ENCODE measurements at regions of chr13 and their contacts with region 1.

Region 1: DNA sequence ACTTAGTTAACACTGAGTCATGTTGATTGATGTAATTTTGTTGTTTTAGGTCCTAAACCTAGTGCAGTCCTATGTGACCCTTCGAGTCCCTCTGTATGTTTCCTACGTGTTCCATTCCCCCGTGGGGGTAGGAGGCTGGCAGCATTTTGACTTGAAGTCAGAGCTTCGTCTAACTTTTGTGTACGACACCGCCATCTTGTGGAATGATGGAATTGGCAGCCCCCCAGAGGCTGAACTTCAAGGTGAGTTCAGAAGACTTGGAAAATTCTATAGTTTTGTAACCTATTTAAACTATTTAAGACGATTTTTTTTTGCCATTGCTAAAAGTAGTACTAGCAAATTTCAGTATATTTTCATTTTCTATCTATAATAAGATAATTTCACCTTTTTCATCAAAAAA is 117.9 kb downstream of the STOML3 start:
- DNase-seq: peak; percentile 18 to 65
- ATAC-seq: peak; percentile 50 to 80
- H3K4me3 ChIP-seq: no peak overlapping the region
- H3K27ac ChIP-seq: no peak overlapping the region
- H3K4me1 ChIP-seq: peaks cover 9 to 15% of the 10 kb centered on the region in 2 donors
- H3K27me3 ChIP-seq: no peaks in the 10 kb centered on the region
- CTCF ChIP-seq: peak in 4 of 5 experiments; percentile 11 to 51 (median 46)
- POLR2A ChIP-seq: no peak

Region 2: DNA sequence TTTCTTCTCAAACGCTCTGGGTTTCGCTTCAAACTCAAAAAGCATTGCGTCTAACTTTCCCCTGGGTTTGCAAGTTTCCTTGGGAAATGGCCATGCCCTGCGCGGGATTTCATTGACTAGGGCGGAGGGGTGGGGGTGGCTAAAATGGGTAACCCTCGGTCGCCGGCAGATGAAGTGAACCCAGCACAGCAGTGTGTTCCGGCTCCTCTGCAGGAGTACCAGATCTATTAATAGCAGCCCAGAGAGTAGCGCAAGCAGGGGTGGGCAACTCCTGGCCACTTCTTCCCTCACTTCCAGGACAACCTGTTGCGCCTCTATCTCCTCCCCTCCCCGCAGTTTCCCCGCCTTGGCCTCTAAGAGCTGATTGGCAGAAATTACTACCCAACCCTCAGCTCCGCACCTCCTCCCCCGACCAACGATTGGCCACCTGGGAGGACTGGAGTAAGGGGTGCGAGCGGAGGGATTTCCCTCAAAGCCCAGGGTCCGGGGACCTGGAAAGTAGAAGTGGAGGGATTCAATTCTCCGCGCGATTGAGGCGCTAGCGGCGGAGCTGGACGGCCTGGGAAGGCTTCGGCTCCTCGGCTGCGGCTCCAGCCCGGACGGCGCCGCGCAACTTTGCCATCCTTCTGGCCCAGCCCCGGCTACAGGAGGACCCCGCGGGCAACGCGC is 186.0 kb before region 1 on chr13 and contains the start of gene FREM2:
- in situ Hi-C with region 1: loop called in 1 of 4 experiments (anchors 25 kb)
- intact Hi-C with region 1: loop called (anchors 1 kb)
- DNase-seq: peak; percentile 38 to 65
- ATAC-seq: peak; percentile 80 to 89
- H3K4me3 ChIP-seq: peak within 1 kb of the TSS; percentile 63 to 70 (median 68)
- H3K27ac ChIP-seq: peak within 1 kb of the TSS; percentile 35 to 61 (median 55)
- H3K4me1 ChIP-seq: peaks cover 2 to 14% of the 10 kb centered on the region in 2 donors
- H3K27me3 ChIP-seq: no peaks in the 10 kb centered on the region
- CTCF ChIP-seq: no peak
- POLR2A ChIP-seq: peak; percentile 19 to 43
- total RNA-seq, gene FREM2: 1.3 to 6.4 (median 2.4) TPM

Measured in gastrocnemius medialis (tissue), 4 donors.